AG04449 (cell line): ENCODE measurements at regions of chr10 and their contacts with region 1.

Region 1: GRCh38 chr10:23314835-23315239 is 29.8 kb downstream of the C10orf67 start:
- DNase-seq: peak; percentile 65
- H3K4me3 ChIP-seq: no peak overlapping the region
- CTCF ChIP-seq: peak; percentile 47

Region 2: GRCh38 chr10:23293145-23293724 is 21.6 kb before region 1 on chr10:
- CTCF ChIA-PET with region 1: interaction called, 20 read pairs
- POLR2A ChIA-PET with region 1: no interaction called
- DNase-seq: no peak
- H3K4me3 ChIP-seq: no peak overlapping the region
- CTCF ChIP-seq: peak; percentile 44

Region 3: DNA sequence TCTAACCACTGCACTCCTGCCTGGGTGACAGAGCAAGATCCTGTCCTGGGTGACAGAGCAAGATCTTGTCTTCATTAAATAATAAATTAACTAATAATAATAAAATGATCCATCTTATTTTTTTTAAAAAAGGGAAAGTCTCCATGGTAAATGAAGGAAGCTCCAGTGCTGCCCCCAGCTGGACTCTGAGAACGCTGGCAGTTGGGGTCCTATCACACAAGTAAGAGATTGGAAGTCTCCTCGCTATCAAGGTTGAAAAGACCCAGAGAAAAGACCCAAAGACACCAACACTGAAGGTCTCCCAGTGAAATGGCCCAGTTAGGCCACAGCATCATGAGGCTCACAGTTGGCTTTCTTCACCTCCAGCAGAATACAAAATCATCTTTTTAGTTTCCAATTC is 43.5 kb after region 1 on chr10:
- CTCF ChIA-PET with region 1: interaction called, 19 read pairs
- POLR2A ChIA-PET with region 1: no interaction called
- DNase-seq: no peak
- H3K4me3 ChIP-seq: no peak overlapping the region
- CTCF ChIP-seq: peak; percentile 7

Region 4: DNA sequence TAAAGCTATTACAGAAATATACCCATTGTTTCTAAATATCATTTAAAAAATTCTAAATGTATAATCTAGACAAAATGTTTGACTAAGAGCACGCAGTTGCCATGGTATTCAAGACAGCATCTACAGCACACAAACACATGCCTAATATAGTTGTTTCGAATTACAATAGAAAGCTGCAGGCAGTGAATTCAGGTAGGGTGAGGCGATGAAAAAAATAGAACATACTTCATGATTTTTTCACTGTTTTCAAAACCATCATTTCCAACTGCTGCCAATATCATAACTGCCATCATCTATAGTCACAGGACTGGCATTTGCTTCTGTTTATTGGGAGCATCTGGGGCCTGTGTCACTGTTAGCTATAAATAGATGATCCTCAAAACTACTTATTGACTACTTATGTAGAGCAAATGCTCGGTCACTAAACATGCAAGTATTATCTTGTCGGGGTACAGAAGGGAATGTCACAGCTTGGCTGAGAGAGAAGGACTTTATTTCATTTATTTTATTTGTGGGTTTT is 89.7 kb after region 1 on chr10:
- CTCF ChIA-PET with region 1: no interaction called
- POLR2A ChIA-PET with region 1: no interaction called
- DNase-seq: peak; percentile 14
- H3K4me3 ChIP-seq: no peak overlapping the region
- CTCF ChIP-seq: no peak

Region 5: GRCh38 chr10:23442936-23443335 is 128.1 kb after region 1 on chr10:
- CTCF ChIA-PET with region 1: interaction called, 10 read pairs
- POLR2A ChIA-PET with region 1: no interaction called
- DNase-seq: no peak
- H3K4me3 ChIP-seq: no peak overlapping the region
- CTCF ChIP-seq: no peak

Region 6: GRCh38 chr10:23516530-23516929 is 201.7 kb after region 1 on chr10:
- CTCF ChIA-PET with region 1: interaction called, 10 read pairs
- POLR2A ChIA-PET with region 1: no interaction called
- DNase-seq: no peak
- H3K4me3 ChIP-seq: no peak overlapping the region
- CTCF ChIP-seq: peak; percentile 50

Region 7: GRCh38 chr10:23525406-23525805 is 210.6 kb after region 1 on chr10:
- CTCF ChIA-PET with region 1: interaction called, 197 read pairs
- POLR2A ChIA-PET with region 1: no interaction called
- DNase-seq: no peak
- H3K4me3 ChIP-seq: no peak overlapping the region
- CTCF ChIP-seq: peak; percentile 14